Heart left ventricle (tissue), 16 donors: ENCODE measurements at regions of chr3 and their contacts with region 1.

Region 1: DNA sequence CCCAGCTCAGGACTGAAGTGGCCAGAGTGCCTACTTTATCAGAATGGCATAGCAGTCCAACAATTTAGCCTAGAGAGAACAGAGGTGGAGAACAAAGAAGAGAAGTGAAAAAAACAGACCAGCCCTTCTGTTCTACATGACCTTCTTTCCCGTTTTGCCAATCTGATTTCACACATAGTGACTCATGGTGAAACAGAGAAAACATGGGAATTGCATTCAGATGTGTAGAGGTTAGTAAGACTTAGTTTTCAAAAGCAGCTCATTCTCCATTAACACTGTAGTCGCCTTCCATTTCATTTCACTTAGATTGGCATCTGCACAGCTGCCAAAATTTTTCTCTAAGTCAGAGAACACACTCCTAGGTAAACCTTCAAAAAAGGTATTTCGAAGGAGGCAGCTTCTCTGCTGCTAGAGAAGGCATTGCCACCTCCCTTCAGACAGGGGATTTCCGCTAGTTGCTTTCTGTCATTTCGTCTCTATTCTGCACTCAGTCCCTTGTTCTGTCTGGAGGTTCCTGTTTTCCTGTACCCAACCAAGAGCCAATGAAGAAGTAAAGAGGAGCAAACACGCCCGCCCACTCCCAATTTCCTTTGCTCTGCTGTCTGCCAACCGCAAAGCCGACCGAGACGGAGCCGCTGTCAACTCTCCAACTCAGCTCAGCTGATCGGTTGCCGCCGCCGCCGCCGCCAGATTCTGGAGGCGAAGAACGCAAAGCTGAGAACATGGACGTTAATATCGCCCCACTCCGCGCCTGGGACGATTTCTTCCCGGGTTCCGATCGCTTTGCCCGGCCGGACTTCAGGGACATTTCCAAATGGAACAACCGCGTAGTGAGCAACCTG is at the start of gene ARL6IP5:
- DNase-seq: peak; percentile 94 to 96 (median 96)
- ATAC-seq: peak; percentile 62 to 81 (median 70)
- H3K4me3 ChIP-seq: peak within 1 kb of the TSS; percentile 58 to 97 (median 90)
- H3K27ac ChIP-seq: peak within 1 kb of the TSS; percentile 87 to 99 (median 94)
- H3K4me1 ChIP-seq: peaks cover 14 to 81% (median 62%) of the 10 kb centered on the region in 12 donors
- H3K27me3 ChIP-seq: no peaks in the 10 kb centered on the region
- CTCF ChIP-seq: no peak
- POLR2A ChIP-seq: peak in 1 of 2 donors; percentile 66
- total RNA-seq, gene ARL6IP5: 164 to 231 (median 197) TPM

Region 2: DNA sequence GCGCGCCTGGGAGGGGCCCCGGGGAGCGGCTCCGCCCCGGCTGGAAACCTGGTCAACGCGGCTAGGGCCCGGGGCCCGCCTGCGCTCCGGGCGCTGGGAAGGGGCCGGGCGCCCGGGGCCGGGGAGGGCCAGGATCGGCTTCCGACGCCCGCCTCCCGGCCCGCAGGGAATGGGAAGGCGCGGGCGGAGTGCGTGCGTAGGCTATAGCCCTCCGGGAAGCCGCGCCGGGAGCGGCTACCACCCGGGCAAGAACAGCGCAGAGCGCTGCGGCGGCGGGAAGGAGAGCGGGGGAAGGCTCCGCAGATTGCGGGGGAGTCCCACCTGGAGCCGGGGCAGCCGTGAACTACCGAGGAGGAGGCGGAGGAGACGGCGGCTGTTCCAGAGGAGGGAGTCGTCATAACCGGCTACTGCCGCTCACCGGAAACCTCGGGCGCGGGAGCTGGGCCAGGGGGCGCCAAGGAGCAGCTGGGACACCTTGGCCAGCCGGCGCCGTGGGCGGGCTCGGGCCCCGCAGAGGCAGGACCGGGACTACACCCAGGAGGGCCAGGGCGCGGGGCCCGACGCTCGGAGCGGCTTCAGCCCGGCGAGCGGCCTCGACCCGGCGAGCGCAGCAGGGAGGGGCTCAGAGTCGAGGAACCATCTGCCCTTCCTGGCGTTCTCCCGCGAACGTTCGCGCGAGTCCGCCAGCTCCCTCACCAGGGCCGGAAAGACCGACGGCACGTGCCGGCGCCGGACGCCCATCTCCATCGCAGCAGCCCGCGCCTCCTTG is 71.1 kb before region 1 on chr3 and contains the start of gene EOGT:
- intact Hi-C with region 1: loop called in 1 of 10 experiments (anchors 5 kb)
- DNase-seq: peak; percentile 91 to 95 (median 94)
- ATAC-seq: peak; percentile 71 to 92 (median 90)
- H3K4me3 ChIP-seq: peak within 1 kb of the TSS; percentile 53 to 94 (median 86)
- H3K27ac ChIP-seq: peak within 1 kb of the TSS; percentile 94 to 99 (median 98)
- H3K4me1 ChIP-seq: peaks cover 0 to 47% (median 24%) of the 10 kb centered on the region in 12 donors
- H3K27me3 ChIP-seq: no peaks in the 10 kb centered on the region
- CTCF ChIP-seq: peak; percentile 39 to 84 (median 64)
- POLR2A ChIP-seq: peak in 1 of 2 donors; percentile 52
- total RNA-seq, gene EOGT: 21.5 to 53.1 (median 34.5) TPM

Region 3: DNA sequence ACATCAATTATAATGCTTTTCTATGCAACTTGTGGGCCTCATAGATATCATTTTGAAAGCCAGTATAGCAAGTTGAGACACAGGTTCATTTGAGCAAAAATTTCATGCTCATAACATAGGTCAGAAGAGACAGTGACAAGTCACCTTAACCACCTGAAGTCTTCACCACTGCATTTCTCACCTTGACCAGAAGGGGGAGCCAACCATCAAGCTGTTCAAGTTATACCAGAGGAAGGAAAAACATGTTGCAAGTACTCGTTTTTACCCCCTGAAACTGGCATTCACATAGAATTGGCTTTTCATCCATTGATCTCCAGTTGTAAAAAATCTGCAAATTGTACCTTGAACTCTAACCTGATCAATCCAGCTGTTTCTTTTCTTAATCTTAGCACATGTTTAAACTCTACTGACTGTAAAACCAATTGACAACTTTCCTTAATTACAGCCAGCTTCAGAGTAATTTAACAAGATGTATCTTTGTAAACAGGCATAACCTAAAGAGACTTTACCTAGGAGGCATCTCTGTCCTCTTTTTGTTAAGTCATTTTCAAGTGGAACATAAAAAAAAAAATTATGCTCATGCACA is 36.4 kb after region 1 on chr3:
- intact Hi-C with region 1: loop called in 4 of 10 experiments (anchors 2 to 5 kb)
- DNase-seq: peak in 4 of 5 donors; percentile 41 to 66 (median 55)
- ATAC-seq: peak in 3 of 4 donors; percentile 33 to 51 (median 50)
- H3K4me3 ChIP-seq: peak overlapping the region; percentile 21 to 63 (median 50)
- H3K27ac ChIP-seq: peak overlapping the region in 11 of 12 donors; percentile 61 to 91 (median 83)
- H3K4me1 ChIP-seq: peaks cover 0 to 19% (median 4%) of the 10 kb centered on the region in 12 donors
- H3K27me3 ChIP-seq: no peaks in the 10 kb centered on the region
- CTCF ChIP-seq: peak; percentile 87 to 96 (median 94)
- POLR2A ChIP-seq: no peak

Region 4: DNA sequence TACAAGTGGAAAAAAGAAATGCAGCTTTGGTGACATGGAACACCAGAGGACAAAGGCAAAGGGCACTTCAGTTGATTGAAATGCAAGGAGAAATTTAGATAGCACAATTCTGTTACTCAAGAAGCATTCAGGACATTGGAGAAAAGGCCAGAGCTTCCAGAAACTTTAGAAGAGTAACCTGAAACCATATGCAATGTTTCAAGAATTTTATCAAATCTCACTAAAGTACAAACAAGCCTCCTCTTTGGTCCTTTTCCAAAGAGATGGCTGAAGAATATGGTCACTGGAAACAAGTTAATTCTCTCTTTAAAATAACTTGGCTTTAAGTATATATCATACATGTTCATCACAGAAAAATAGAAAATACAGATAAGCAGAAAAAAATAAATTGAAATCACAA is 52.5 kb after region 1 on chr3:
- intact Hi-C with region 1: no loop called
- DNase-seq: no peak
- ATAC-seq: no peak
- H3K4me3 ChIP-seq: no peak overlapping the region
- H3K27ac ChIP-seq: no peak overlapping the region
- H3K4me1 ChIP-seq: peaks cover 0 to under 1% (median 0%) of the 10 kb centered on the region in 12 donors
- H3K27me3 ChIP-seq: no peaks in the 10 kb centered on the region
- CTCF ChIP-seq: no peak
- POLR2A ChIP-seq: no peak